ENCODE measurements at regions of chr16 and their contacts with region 1.

Region 1: DNA sequence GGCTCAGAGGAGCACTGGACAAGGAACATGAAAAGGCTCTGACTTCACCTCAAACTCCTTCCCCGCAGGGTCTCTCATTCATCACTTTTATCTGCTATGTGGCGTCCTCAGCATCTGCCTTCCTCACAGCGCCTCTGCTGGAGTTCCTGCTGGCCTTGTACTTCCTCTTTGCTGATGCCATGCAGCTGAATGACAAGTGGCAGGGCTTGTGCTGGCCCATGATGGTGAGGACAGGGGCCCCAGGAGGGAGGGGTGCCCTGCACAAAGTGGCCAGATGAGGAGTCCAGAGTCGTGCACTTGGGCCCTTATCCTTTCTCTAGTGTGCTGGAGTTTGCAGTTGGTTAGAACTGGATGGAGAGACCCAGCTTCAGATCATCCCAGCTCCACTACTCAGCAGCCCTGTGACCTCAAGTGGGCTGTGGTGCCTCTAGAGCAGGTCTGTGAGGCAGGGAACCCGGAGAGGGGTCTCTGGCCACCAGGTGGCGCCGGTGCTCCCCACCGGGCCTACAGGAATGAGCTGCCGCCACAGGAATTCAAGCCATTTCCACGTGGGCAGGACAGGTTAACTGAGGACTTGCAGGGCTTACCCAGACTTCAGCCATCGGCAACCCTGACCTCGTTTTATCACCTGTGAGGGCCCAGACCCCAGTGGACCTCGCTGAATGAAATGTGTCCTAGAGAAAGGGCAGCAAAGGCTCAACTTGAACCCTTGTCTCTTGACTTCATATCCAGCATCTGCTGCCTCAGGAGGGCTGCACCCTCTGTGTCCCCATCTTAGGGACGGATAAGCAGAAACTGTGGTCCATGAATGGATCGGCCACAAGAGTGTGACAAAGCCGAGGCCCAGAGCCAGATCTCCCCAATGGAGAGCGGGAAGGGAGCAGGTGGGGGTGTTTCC is 4.0 kb downstream of the CMTM3 start:
- DNase-seq: peak; percentile 94
- H3K4me3 ChIP-seq: no peak overlapping the region; a peak in 1 of 4 replicates
- H3K27ac ChIP-seq: peak overlapping the region; percentile 36 to 38; a peak in 3 of 4 replicates
- H3K4me1 ChIP-seq: peaks cover 7 to 19% of the 10 kb centered on the region in 2 experiments; a peak in 3 of 4 replicates
- H3K27me3 ChIP-seq: no peaks in the 10 kb centered on the region
- CTCF ChIP-seq: peak; percentile 94
- EP300 ChIP-seq: no peak
- RAD21 ChIP-seq: peak; percentile 72

Region 2: GRCh38 chr16:66618588-66619375 is 10.3 kb after region 1 on chr16:
- CTCF ChIA-PET with region 1: interaction called, 44 read pairs
- POLR2A ChIA-PET with region 1: no interaction called
- DNase-seq: no peak
- H3K4me3 ChIP-seq: no peak overlapping the region
- H3K27ac ChIP-seq: peak overlapping the region; percentile 60 to 84
- H3K4me1 ChIP-seq: peaks cover 18 to 41% of the 10 kb centered on the region in 2 experiments
- H3K27me3 ChIP-seq: no peaks in the 10 kb centered on the region
- CTCF ChIP-seq: no peak
- EP300 ChIP-seq: peak in 1 of 2 experiments; percentile 65; a peak in 1 of 4 replicates
- RAD21 ChIP-seq: no peak

Region 3: GRCh38 chr16:66639091-66639885 is 30.8 kb after region 1 on chr16:
- CTCF ChIA-PET with region 1: interaction called, 13 read pairs
- POLR2A ChIA-PET with region 1: no interaction called
- DNase-seq: no peak
- H3K4me3 ChIP-seq: no peak overlapping the region
- H3K27ac ChIP-seq: no peak overlapping the region
- H3K4me1 ChIP-seq: no peaks in the 10 kb centered on the region
- H3K27me3 ChIP-seq: no peaks in the 10 kb centered on the region
- CTCF ChIP-seq: no peak
- EP300 ChIP-seq: no peak
- RAD21 ChIP-seq: no peak